MCF 10A (cell line): ENCODE measurements at regions of chr1 and their contacts with region 1.

Region 1: DNA sequence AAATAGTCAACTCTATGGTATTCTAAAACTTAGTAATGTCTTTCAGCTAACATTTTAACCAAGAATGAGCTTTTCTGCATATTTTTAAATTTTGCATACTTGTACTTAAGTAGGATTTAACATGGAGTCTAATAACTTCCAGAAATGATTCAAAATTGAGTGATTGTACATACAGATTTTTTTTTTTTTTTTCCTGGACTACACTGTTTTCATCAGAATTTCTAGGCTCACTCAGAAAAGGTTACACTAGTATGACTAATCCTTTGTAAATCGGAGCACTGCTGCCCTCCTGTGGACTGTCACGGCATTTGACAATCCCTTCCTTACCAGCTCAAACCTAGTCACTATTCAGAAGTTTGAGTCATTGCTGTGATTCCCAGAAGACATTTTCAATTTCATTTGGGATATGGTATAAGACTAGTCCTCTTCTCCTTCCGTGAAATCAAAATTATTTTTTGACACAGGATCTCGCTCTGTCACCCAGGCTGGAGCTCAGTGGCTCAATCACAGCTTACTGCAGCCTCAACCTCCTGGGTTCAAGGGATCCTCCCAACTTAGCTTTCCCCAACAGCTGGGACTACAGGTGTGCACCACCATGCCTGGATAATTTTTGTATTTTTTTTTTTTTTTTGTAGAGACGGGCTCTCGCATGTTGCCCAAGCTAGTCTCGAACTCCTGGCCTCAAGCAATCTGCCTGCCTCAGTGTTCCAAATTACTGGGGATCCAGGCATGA is 45.5 kb downstream of the CD46 start:
- DNase-seq: peak; percentile 97
- H3K4me3 Mint-ChIP-seq: no peak overlapping the region
- H3K27ac Mint-ChIP-seq: peak overlapping the region; percentile 46
- H3K4me1 Mint-ChIP-seq: peaks cover 14% of the 10 kb centered on the region
- H3K27me3 Mint-ChIP-seq: no peaks in the 10 kb centered on the region
- CTCF ChIP-seq: peak; percentile 95

Region 2: DNA sequence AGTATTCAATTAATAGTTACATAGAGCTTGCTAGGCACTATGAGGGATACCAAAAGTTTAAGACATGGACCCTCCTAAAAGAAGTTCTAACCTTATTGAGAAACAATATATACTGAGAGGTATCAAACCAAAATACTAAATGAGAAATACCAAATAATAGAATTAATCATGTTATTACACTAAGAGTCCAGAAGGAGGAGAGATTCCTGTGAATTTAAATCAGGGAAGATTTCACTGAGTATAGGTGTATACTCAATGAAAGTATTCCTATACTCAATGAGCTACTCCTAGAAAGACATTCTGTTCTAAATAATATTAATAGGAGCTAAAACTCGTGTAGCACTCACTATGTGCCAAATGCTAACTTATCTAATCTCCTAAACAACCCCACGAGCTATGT is 143.1 kb before region 1 on chr1:
- CTCF ChIA-PET with region 1: interaction called, 6 read pairs
- POLR2A ChIA-PET with region 1: interaction called, 4 read pairs
- intact Hi-C with region 1: loop called (anchors 1 kb)
- DNase-seq: no peak
- H3K4me3 Mint-ChIP-seq: no peak overlapping the region
- H3K27ac Mint-ChIP-seq: no peak overlapping the region
- H3K4me1 Mint-ChIP-seq: no peaks in the 10 kb centered on the region
- H3K27me3 Mint-ChIP-seq: peaks cover 15% of the 10 kb centered on the region
- CTCF ChIP-seq: peak; percentile 28

Region 3: GRCh38 chr1:207698822-207699483 is 98.4 kb before region 1 on chr1:
- CTCF ChIA-PET with region 1: interaction called, 41 read pairs
- POLR2A ChIA-PET with region 1: interaction called, 4 read pairs
- intact Hi-C with region 1: loop called (anchors 1 kb)
- DNase-seq: peak; percentile 86
- H3K4me3 Mint-ChIP-seq: no peak overlapping the region
- H3K27ac Mint-ChIP-seq: no peak overlapping the region
- H3K4me1 Mint-ChIP-seq: peaks cover 10% of the 10 kb centered on the region
- H3K27me3 Mint-ChIP-seq: no peaks in the 10 kb centered on the region
- CTCF ChIP-seq: peak; percentile 97

Region 4: DNA sequence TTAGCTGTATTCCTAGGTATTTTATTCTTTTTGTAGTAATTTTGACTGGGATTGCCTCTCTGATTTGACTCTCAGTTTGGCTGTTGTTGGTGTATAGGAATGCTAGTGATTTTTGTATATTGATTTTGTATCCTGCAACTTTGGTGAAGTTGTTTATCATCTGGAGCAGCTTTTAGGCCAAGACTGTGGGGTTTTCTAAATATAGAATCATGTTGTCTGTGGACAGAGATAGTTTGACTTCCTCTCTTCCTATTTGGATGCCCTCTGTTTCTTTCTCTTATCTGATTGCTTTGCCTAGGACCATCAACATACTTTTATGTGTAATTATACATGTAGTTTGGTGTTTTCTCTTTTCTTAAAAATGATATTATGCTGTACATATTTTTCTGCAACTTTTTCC is 18.4 kb before region 1 on chr1:
- CTCF ChIA-PET with region 1: interaction called, 23 read pairs
- POLR2A ChIA-PET with region 1: interaction called, 5 read pairs
- intact Hi-C with region 1: no loop called
- DNase-seq: no peak
- H3K4me3 Mint-ChIP-seq: no peak overlapping the region
- H3K27ac Mint-ChIP-seq: no peak overlapping the region
- H3K4me1 Mint-ChIP-seq: peaks cover 4% of the 10 kb centered on the region
- H3K27me3 Mint-ChIP-seq: no peaks in the 10 kb centered on the region
- CTCF ChIP-seq: no peak

Region 5: GRCh38 chr1:207818971-207819451 is 21.6 kb after region 1 on chr1:
- CTCF ChIA-PET with region 1: interaction called, 68 read pairs
- POLR2A ChIA-PET with region 1: interaction called, 61 read pairs
- intact Hi-C with region 1: no loop called
- DNase-seq: peak; percentile 78
- H3K4me3 Mint-ChIP-seq: peak overlapping the region; percentile 53
- H3K27ac Mint-ChIP-seq: peak overlapping the region; percentile 81
- H3K4me1 Mint-ChIP-seq: peaks cover 81% of the 10 kb centered on the region
- H3K27me3 Mint-ChIP-seq: no peaks in the 10 kb centered on the region
- CTCF ChIP-seq: no peak

Region 6: DNA sequence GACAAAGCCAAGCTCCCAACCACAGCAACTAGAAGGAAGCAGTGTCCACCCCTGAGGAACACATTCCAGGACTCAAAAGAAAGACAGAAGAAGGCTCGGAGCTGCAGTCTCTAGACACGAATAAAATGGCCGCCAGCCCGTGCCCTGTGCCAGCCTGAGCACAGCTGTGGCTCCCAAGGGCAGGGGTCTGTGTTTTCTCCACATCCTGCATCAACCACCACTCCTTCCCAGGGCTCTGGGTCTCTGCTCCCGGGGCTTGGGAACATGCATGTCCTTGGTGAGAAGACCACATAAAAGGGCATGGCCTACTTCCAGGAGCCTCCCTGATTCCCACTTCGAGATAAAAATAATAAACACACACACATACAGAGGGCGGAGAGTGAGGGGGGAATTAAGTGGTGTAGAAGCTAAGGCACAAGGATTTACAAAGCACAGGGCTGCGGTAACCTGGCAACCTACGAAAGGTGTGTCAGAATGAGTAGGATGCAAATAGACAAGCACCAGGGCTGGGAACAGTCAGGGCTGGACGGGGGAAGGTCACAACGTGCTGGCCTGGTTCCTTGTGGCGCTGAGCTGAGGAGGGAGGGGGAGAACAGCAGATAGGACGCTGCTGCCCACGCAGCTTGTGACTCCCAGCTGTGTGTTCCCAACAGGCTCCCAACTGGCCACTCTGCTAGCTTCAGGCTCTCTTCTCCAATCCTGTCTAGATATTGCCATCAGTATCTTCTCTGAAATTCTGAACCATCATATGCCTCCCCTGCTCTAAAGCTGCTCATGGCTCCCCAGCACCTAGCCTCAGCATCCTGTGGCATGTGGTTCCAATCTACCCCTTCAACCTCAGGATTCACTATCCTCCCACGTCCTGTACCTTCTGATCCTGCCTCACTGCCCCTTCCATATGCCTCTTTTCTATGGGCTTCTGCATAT is 41.0 kb after region 1 on chr1:
- CTCF ChIA-PET with region 1: interaction called, 15 read pairs
- POLR2A ChIA-PET with region 1: no interaction called
- intact Hi-C with region 1: no loop called
- DNase-seq: no peak
- H3K4me3 Mint-ChIP-seq: no peak overlapping the region
- H3K27ac Mint-ChIP-seq: peak overlapping the region; percentile 32
- H3K4me1 Mint-ChIP-seq: peaks cover 34% of the 10 kb centered on the region
- H3K27me3 Mint-ChIP-seq: no peaks in the 10 kb centered on the region
- CTCF ChIP-seq: no peak